Left lung (tissue), 14 donors: ENCODE measurements at regions of chr9 and their contacts with region 1.

Region 1: DNA sequence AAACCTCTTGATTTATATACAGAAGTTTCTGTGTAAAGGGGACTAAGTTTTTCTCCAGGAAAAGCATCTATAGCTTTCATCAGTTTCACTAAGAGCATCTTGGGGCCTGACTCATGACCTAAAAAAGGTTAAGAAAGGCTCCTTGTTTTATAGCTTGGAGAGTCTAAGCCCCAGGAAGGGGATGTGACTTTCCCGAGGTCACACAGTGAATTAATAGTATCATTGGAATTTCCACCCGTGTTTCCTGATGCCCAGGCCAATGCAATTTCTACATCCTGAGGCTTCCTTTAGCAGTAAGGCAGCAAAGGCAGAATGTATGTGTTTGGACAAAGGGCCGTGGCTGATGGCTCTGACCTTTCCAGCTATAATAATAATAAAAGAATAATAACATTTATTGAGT is 8.6 kb downstream of the MORN5 start:
- DNase-seq: no peak
- ATAC-seq: no peak
- H3K4me3 ChIP-seq: no peak overlapping the region
- H3K27ac ChIP-seq: no peak overlapping the region
- H3K4me1 ChIP-seq: no peaks in the 10 kb centered on the region
- H3K27me3 ChIP-seq: peaks cover 0 to under 1% of the 10 kb centered on the region in 2 donors
- CTCF ChIP-seq: no peak

Region 2: GRCh38 chr9:121944716-121945191 is 223.6 kb before region 1 on chr9:
- intact Hi-C with region 1: no loop called
- DNase-seq: no peak
- ATAC-seq: no peak
- H3K4me3 ChIP-seq: no peak overlapping the region
- H3K27ac ChIP-seq: no peak overlapping the region
- H3K4me1 ChIP-seq: no peaks in the 10 kb centered on the region
- H3K27me3 ChIP-seq: no peaks in the 10 kb centered on the region
- CTCF ChIP-seq: no peak

Region 3: GRCh38 chr9:122213589-122214413 is 45.4 kb after region 1 on chr9:
- intact Hi-C with region 1: loop called in 1 of 2 experiments (anchors 10 kb)
- DNase-seq: peak in 1 of 4 donors; percentile 60
- ATAC-seq: peak; percentile 83
- H3K4me3 ChIP-seq: peak overlapping the region; percentile 21 to 41
- H3K27ac ChIP-seq: no peak overlapping the region
- H3K4me1 ChIP-seq: peaks cover 8 to 11% of the 10 kb centered on the region in 2 donors
- H3K27me3 ChIP-seq: peaks cover 61 to 94% of the 10 kb centered on the region in 2 donors
- CTCF ChIP-seq: no peak